ENCODE measurements at regions of chrX and their contacts with region 1.

Region 1: GRCh38 chrX:49043220-49043986 is at the start of gene TFE3:
- DNase-seq: peak; percentile 94
- H3K4me3 Mint-ChIP-seq: peak within 1 kb of the TSS; percentile 96
- H3K27ac Mint-ChIP-seq: peak within 1 kb of the TSS; percentile 95
- H3K4me1 Mint-ChIP-seq: peaks cover 39% of the 10 kb centered on the region
- H3K27me3 Mint-ChIP-seq: no peaks in the 10 kb centered on the region
- total RNA-seq, gene TFE3: 34.4 and 37.0 TPM in 2 replicates

Region 2: DNA sequence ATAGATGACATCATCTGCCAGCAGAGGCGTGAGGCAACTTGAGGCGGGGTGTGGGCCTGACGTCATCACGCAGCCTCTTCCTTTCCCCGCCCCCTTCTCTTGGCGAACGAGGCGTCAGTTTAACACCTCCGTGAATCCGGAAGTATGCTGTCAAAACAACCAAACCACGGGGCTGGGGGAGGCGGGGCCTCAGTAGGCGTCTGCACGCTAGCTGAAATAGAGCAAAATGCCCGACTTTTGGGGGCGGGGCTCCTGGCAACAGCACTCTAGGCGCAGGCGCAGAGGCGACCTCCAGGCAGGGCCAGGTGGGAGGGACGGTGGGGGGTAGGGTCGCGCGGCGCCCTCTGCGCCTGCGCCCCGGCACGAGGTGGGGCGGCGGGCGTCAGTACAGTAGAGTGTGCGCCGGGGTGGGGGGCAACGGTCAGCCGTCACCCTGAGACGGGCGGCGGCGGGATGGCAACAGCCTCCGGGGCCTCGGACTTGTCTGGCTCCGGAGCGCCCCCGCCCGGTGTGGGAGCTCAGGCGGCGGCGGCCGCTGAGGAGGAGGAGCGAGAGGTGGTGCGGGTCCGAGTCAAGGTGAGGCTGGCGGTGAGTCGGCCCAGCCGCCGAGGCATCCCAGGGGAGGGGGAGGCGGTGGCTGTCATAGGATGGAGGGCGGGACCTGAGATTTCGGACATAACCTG is 503.9 kb before region 1 on chrX and contains the start of gene TBC1D25:
- intact Hi-C with region 1: loop called (anchors 1 kb)
- DNase-seq: peak; percentile 93
- H3K4me3 Mint-ChIP-seq: peak within 1 kb of the TSS; percentile 94
- H3K27ac Mint-ChIP-seq: peak within 1 kb of the TSS; percentile 92
- H3K4me1 Mint-ChIP-seq: peaks cover 17% of the 10 kb centered on the region
- H3K27me3 Mint-ChIP-seq: no peaks in the 10 kb centered on the region
- total RNA-seq, gene TBC1D25: 13.5 and 16.0 TPM in 2 replicates

Region 3: DNA sequence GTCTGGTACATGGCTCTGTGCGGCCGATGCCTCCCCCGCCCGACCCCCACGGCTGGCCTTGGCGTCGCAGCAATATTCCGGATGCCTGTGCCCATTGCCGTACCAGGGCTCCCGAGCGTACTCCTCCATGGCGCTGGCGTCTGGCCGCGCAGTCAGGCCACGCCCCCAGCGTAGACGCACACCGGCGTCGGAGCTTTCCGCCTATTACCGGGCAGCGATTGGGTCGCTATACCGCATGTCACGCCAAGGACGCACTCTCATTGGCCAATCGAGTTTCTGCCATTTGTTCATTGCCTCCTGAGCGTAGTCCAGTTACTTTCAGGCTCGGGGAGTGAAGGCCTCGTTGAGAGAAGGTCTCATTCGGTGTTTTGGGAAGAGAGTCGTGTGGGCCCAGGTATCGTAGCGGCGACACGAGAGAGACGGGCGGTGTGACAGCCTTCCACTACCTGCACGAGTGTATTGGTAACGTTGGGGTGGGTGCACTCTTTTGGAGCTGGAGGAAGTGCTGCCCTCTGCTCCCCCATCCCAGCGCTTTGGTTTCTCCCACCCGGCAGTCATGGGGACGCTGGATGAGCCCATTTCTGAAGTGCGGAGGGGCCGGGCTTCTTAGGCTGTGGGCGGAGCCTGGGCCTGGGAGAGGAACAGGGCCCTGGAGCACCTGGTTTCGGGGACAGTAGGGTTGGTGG is 145.6 kb before region 1 on chrX and contains the starts of genes PQBP1 and TIMM17B:
- intact Hi-C with region 1: loop called (anchors 1 kb)
- DNase-seq: peak; percentile 84
- H3K4me3 Mint-ChIP-seq: peak within 1 kb of the TSS; percentile 97
- H3K27ac Mint-ChIP-seq: peak within 1 kb of the TSS; percentile 100
- H3K4me1 Mint-ChIP-seq: peaks cover 8% of the 10 kb centered on the region
- H3K27me3 Mint-ChIP-seq: no peaks in the 10 kb centered on the region
- total RNA-seq, gene PQBP1: 112 and 119 TPM in 2 replicates
- total RNA-seq, gene TIMM17B: 72.2 and 72.3 TPM in 2 replicates

Region 4: DNA sequence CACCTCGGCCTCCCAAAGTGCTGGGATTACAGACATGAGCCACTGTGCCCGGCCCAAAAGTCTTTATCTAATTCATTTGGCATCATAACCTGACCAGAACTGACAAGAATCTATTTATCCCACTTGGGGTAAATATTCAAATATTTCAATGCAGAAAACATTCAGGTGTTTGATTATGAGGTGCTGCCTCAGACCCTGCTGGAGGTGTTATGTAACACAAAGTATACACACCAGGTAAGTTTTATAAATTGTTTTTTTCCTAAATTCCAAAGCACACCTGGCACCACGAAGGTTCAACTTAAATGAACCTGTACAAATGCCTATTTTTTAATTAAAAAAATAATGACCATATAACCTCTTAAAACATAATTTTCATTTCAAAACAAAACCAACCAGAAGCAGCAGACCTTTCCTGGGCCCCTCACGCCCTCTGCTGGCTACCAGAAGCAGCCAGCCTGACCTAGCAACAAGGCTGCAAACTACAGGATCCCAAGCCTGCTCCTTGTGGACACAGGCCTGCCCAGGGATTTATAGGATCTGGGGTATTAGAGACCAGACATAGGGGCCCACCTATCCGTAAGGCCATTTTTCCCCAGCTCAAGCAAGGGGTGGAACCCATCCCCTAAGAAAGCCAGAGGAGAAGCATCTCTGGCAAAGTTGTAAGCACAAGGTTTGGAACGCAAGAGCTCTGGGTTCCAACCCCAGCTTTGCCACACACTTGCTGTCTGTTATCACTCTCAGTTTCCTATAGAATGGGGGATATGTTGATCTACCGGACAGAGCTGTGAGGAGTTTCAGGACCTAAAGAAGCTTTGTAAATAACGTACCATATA is 97.7 kb before region 1 on chrX:
- intact Hi-C with region 1: no loop called
- DNase-seq: no peak
- H3K4me3 Mint-ChIP-seq: peak overlapping the region; percentile 17
- H3K27ac Mint-ChIP-seq: no peak overlapping the region
- H3K4me1 Mint-ChIP-seq: peaks cover 34% of the 10 kb centered on the region
- H3K27me3 Mint-ChIP-seq: no peaks in the 10 kb centered on the region

Region 5: GRCh38 chrX:48957827-48958634 is 85.4 kb before region 1 on chrX:
- intact Hi-C with region 1: loop called (anchors 1 kb)
- DNase-seq: peak; percentile 90
- H3K4me3 Mint-ChIP-seq: peak overlapping the region; percentile 98
- H3K27ac Mint-ChIP-seq: peak overlapping the region; percentile 100
- H3K4me1 Mint-ChIP-seq: peaks cover 33% of the 10 kb centered on the region
- H3K27me3 Mint-ChIP-seq: no peaks in the 10 kb centered on the region

Region 6: DNA sequence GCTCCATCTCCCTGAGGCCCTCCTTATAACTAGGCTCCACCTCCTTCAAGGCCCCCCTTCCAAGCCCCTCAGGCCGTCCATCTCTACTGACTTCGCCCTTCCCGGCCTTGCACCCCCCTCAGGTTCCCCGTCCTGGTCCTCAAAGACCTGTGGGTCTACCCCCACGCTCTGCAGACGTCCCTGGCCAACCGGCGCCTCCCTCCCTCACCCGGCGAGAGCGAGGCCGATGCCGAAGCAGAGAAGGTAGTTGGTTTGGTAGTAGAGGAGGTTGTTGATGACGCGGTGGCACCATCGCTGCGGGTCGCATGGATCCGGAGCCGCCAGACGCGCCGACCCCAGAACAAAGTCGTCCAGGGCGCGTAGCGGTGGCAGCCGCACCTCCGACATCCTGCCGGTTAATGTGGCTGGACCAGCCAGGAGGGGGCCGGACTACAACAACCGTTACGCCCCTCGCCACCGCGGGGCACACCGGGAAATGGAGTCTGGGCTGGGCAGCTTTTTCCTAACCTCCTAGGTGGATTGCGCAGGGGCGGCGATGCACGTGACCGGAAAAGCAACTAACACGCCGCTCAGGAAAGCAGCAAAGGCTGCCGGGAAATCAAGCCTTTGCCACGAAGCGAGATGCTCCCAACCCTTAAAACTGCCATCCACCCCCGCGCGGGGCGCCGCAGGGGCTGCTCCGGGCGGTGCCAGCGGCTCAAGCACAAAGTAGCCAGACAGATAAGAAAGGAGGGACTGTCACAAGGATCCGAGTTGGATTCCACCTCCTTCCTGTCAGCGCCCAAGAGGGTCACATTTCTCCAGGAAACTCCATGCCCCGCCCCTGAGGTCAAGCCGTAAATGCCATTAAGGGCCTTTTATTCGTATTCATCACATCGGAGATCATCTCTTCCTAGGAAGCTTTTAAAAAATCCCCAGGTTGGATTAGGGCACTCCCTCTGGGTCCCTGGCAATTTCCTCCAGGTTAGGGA is 30.5 kb after region 1 on chrX and contains the start of gene PRAF2:
- intact Hi-C with region 1: loop called (anchors 1 kb)
- DNase-seq: peak; percentile 84
- H3K4me3 Mint-ChIP-seq: peak within 1 kb of the TSS; percentile 84
- H3K27ac Mint-ChIP-seq: peak within 1 kb of the TSS; percentile 74
- H3K4me1 Mint-ChIP-seq: peaks cover 12% of the 10 kb centered on the region
- H3K27me3 Mint-ChIP-seq: no peaks in the 10 kb centered on the region
- total RNA-seq, gene PRAF2: 14.9 and 15.4 TPM in 2 replicates

Region 7: DNA sequence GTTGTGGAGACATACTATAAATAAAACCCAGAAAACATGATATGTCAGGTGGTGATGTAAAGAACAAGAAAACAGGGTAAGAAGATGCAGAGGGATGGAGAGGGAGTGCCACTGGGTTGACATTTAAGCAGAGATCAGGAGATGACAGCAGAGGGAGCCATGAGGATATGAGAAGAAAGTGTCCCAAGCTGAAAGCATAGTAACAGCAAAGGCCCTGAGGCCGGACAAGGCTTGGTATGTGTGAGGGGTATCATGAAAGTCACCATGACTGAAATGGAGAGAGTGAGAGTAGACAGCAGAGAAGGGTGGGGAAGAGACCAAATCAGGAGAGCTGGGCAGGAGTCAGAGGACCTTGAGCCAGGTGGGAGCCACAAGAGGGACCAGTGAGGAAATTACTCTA is 76.7 kb after region 1 on chrX:
- intact Hi-C with region 1: loop called (anchors 5 kb)
- DNase-seq: no peak
- H3K4me3 Mint-ChIP-seq: peak overlapping the region; percentile 69
- H3K27ac Mint-ChIP-seq: peak overlapping the region; percentile 71
- H3K4me1 Mint-ChIP-seq: peaks cover 40% of the 10 kb centered on the region
- H3K27me3 Mint-ChIP-seq: no peaks in the 10 kb centered on the region

Region 8: GRCh38 chrX:49199906-49200771 is 156.7 kb after region 1 on chrX and contains the start of gene SYP:
- intact Hi-C with region 1: no loop called
- DNase-seq: peak; percentile 83
- H3K4me3 Mint-ChIP-seq: peak within 1 kb of the TSS; percentile 53
- H3K27ac Mint-ChIP-seq: peak within 1 kb of the TSS; percentile 58
- H3K4me1 Mint-ChIP-seq: peaks cover 19% of the 10 kb centered on the region
- H3K27me3 Mint-ChIP-seq: peaks cover 7% of the 10 kb centered on the region
- total RNA-seq, gene SYP: 2.9 and 3.3 TPM in 2 replicates